Heart right ventricle (tissue), 16 donors: ENCODE measurements at regions of chr18 and their contacts with region 1.

Region 1: DNA sequence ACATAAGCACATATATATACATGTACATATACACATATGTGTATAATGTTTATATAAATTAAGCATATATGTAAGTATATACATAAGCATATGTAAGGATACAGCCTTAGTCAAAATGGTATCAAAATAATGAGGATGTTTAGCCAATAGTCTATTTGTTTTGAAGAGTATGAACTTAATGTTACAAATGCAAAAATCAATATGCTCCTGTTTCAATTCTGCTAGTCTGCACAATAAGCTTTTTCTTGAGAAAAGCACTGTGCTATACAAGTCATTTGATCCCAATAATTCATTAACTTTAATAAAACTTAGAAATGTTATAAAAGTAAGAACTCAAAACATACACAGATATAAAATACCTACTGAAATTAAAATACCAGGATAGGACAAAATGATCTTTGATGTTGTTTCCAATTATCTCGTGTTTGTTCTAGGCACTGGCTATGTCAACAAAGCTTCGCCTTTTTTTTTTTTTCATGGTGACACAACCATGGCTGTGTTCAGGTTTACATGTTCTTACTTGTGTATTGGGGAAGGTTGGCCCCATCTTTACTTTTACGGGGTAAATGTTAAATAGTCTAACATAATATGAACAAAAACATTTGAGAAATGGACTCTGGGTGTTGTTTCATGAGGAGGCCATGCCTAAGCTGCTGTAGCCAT is 271.1 kb upstream of the CDH19 start:
- DNase-seq: no peak
- ATAC-seq: no peak
- H3K4me3 ChIP-seq: no peak overlapping the region
- H3K27ac ChIP-seq: no peak overlapping the region
- H3K4me1 ChIP-seq: no peaks in the 10 kb centered on the region
- H3K27me3 ChIP-seq: no peaks in the 10 kb centered on the region
- CTCF ChIP-seq: no peak

Region 2: DNA sequence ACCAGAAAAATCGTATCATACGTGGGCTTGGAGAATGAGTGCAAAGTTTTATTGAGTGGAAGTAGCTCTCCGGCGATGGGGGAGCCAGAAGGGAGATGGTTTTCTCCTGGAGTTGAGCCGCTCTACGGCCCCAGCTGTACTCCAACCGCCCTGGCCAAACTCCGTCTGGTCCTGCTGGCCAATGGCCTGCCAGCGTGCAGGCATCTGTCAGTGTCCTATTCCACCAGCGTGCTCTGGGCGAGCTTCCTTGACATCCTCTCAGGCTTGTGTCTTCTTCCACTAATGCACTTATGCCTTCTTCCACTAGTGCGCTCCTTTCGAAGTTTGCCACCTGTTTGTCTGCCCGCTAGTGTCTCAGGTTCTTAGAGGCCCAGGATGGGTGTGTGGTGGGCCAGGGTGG is 74.5 kb after region 1 on chr18:
- intact Hi-C with region 1: loop called in 1 of 10 experiments (anchors 10 kb)
- DNase-seq: no peak
- ATAC-seq: no peak
- H3K4me3 ChIP-seq: no peak overlapping the region
- H3K27ac ChIP-seq: no peak overlapping the region
- H3K4me1 ChIP-seq: no peaks in the 10 kb centered on the region
- H3K27me3 ChIP-seq: no peaks in the 10 kb centered on the region
- CTCF ChIP-seq: no peak